Caco-2 (cell line): ENCODE measurements at regions of chr14 and their contacts with region 1.

Region 1: GRCh38 chr14:73977600-73978295 is 27.6 kb downstream of the COQ6 start:
- DNase-seq: peak in 1 of 2 experiments; percentile 5
- H3K4me3 ChIP-seq: no peak overlapping the region
- H3K4me3 Mint-ChIP-seq: no peak overlapping the region
- H3K27ac Mint-ChIP-seq: peak overlapping the region; percentile 36
- H3K4me1 ChIP-seq: peaks cover 22% of the 10 kb centered on the region
- H3K4me1 Mint-ChIP-seq: peaks cover 22% of the 10 kb centered on the region
- H3K27me3 ChIP-seq: no peaks in the 10 kb centered on the region
- H3K27me3 Mint-ChIP-seq: no peaks in the 10 kb centered on the region
- CTCF ChIP-seq: no peak

Region 2: GRCh38 chr14:73878436-73878835 is 99.3 kb before region 1 on chr14:
- CTCF ChIA-PET with region 1: no interaction called
- POLR2A ChIA-PET with region 1: no interaction called
- intact Hi-C with region 1: no loop called
- DNase-seq: no peak
- H3K4me3 ChIP-seq: no peak overlapping the region
- H3K4me3 Mint-ChIP-seq: no peak overlapping the region
- H3K27ac Mint-ChIP-seq: no peak overlapping the region
- H3K4me1 ChIP-seq: no peaks in the 10 kb centered on the region
- H3K4me1 Mint-ChIP-seq: peaks cover 4% of the 10 kb centered on the region
- H3K27me3 ChIP-seq: no peaks in the 10 kb centered on the region
- H3K27me3 Mint-ChIP-seq: no peaks in the 10 kb centered on the region
- CTCF ChIP-seq: no peak

Region 3: GRCh38 chr14:73958591-73958990 is 19.2 kb before region 1 on chr14:
- CTCF ChIA-PET with region 1: no interaction called
- POLR2A ChIA-PET with region 1: no interaction called
- intact Hi-C with region 1: no loop called
- DNase-seq: no peak
- H3K4me3 ChIP-seq: no peak overlapping the region
- H3K4me3 Mint-ChIP-seq: no peak overlapping the region
- H3K27ac Mint-ChIP-seq: no peak overlapping the region
- H3K4me1 ChIP-seq: no peaks in the 10 kb centered on the region
- H3K4me1 Mint-ChIP-seq: no peaks in the 10 kb centered on the region
- H3K27me3 ChIP-seq: no peaks in the 10 kb centered on the region
- H3K27me3 Mint-ChIP-seq: no peaks in the 10 kb centered on the region
- CTCF ChIP-seq: peak in 1 of 2 experiments; percentile 20

Region 4: GRCh38 chr14:74018586-74019407 is 41.0 kb after region 1 on chr14 and contains the starts of genes BBOF1 and ENTPD5:
- CTCF ChIA-PET with region 1: no interaction called
- POLR2A ChIA-PET with region 1: no interaction called
- intact Hi-C with region 1: loop called (anchors 5 kb)
- DNase-seq: peak; percentile 86 to 90
- H3K4me3 ChIP-seq: peak within 1 kb of the TSS; percentile 51
- H3K4me3 Mint-ChIP-seq: peak within 1 kb of the TSS; percentile 90
- H3K27ac Mint-ChIP-seq: peak within 1 kb of the TSS; percentile 90
- H3K4me1 ChIP-seq: peaks cover 10% of the 10 kb centered on the region
- H3K4me1 Mint-ChIP-seq: peaks cover under 1% of the 10 kb centered on the region
- H3K27me3 ChIP-seq: no peaks in the 10 kb centered on the region
- H3K27me3 Mint-ChIP-seq: no peaks in the 10 kb centered on the region
- CTCF ChIP-seq: no peak
- total RNA-seq, gene BBOF1: 0.66 and 0.91 TPM in 2 replicates
- total RNA-seq, gene ENTPD5: 9.1 and 9.3 TPM in 2 replicates

Region 5: GRCh38 chr14:74029136-74029535 is 51.4 kb after region 1 on chr14:
- CTCF ChIA-PET with region 1: no interaction called
- POLR2A ChIA-PET with region 1: no interaction called
- intact Hi-C with region 1: loop called (anchors 1 kb)
- DNase-seq: peak in 1 of 2 experiments; percentile 3
- H3K4me3 ChIP-seq: no peak overlapping the region
- H3K4me3 Mint-ChIP-seq: no peak overlapping the region
- H3K27ac Mint-ChIP-seq: no peak overlapping the region
- H3K4me1 ChIP-seq: peaks cover 19% of the 10 kb centered on the region
- H3K4me1 Mint-ChIP-seq: peaks cover 13% of the 10 kb centered on the region
- H3K27me3 ChIP-seq: no peaks in the 10 kb centered on the region
- H3K27me3 Mint-ChIP-seq: no peaks in the 10 kb centered on the region
- CTCF ChIP-seq: no peak